Endothelial cell of umbilical vein (primary cell): ENCODE measurements at regions of chr9 and their contacts with region 1.

Region 1: DNA sequence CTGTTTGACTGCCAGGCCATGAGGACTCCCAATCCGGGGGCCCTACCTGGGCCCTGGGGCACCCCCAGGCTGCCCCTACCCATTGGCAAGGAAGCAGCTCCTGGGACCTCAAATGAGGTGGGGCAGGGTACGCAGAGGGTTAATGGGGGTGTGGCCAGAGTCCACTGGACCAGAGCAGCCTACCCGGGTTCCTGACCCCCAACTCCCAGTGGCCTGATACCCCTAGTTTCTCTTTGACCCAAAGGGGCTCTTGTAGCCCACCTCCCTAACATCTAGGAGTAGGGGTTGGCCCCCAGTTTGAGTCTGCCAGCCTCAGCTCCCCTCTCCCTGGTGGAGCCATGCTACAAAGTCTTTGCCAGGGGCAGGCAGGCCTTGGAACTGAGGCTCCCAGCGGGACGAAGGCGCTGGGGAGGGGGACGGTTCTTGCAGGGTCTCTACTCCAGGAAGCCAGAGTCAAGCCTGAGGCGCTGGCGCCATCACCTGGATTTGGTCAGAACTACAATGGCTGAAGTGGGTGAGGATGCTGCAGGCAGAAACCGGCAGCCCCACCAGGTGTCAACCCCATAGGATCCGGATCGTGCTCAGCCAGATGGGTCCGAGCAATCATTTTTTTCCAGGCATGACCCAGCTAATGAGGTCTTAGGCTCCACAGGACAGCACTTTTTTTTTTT is 8.4 kb upstream of the CERCAM start:
- DNase-seq: peak; percentile 76
- H3K4me3 ChIP-seq: no peak overlapping the region
- H3K27ac ChIP-seq: no peak overlapping the region
- H3K4me1 ChIP-seq: no peaks in the 10 kb centered on the region
- H3K27me3 ChIP-seq: peaks cover 9% of the 10 kb centered on the region in 2 experiments
- CTCF ChIP-seq: peak; percentile 54 to 84
- POLR2A ChIP-seq: no peak

Region 2: DNA sequence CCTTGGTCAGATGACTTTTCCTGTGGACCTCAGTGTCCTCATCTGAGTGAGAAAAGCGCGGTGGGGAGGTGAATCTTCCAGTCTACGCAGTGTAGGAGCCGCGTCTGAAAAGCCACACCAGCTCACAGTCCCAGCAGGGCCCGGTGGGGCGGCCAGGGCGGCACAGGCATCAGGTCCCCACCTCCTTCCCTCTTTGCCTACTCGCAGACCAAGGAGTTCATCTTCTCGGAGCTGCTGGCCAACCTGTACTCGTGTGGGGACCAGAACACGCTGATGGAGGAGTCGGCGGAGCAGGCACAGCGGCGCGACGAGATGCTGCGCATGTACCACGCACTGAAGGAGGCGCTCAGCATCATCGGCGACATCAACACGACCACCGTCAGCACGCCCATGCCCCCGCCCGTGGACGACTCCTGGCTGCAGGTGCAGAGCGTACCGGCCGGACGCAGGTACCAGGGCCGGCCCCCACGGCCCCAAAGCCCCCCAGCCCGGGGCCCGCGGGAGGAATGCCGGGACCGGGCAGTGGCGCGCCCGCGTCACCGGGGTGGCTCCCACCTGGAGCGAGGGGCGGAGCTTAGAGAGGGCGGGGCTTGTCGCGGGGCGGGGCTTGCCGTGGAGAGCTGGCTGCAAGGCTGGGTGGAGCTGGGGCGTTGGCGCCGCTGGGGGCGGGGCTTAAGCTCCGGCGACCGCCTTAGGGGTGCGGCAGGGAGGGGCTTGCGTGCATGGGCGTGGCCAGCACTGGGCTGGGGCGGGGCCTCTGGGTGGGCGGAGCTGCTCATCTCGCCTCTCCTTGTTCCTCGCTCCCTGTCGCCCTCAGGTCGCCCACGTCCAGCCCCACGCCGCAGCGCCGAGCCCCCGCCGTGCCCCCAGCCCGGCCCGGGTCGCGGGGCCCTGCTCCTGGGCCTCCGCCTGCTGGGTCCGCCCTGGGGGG is 162.1 kb before region 1 on chr9:
- CTCF ChIA-PET with region 1: interaction called, 11 read pairs
- POLR2A ChIA-PET with region 1: no interaction called
- dilution Hi-C with region 1: no loop called
- intact Hi-C with region 1: loop called (anchors 1 kb)
- DNase-seq: peak; percentile 82
- H3K4me3 ChIP-seq: peak overlapping the region; percentile 34 to 52 (median 36)
- H3K27ac ChIP-seq: no peak overlapping the region
- H3K4me1 ChIP-seq: peaks cover 28% of the 10 kb centered on the region
- H3K27me3 ChIP-seq: no peaks in the 10 kb centered on the region
- CTCF ChIP-seq: no peak
- POLR2A ChIP-seq: no peak

Region 3: DNA sequence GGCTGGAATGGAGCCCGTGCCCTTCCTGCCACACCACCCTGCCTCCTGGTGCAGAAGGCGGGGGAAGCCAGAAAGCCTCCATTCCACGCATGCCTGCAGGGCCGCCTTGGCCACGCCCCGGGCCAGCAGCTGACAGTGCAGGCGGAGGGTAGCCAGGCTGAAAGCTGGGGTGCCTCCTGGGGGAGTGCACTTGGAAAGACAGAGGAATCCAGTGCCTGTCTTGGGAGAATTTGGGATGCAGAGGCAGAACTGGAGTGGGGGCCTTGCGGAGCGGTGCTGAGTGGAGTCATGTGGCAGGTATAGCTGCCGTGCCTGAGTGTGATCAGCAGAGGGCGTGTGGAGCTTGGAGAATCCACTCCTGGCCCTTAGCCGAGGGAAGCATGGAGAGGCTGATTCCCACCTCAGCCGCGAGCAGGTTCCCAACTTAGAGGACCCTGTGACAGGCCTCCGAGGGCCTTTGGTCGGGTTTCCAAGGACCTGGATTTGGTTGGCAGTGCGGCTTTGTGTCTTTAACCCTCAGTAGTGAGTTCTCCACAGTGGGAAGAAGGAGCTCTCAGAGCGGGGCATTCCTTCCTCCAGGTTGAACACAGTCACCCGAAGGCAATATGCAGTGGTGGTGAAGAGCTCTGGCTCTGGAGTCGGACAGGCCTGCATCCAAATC is 50.1 kb before region 1 on chr9:
- CTCF ChIA-PET with region 1: interaction called, 108 read pairs
- POLR2A ChIA-PET with region 1: no interaction called
- dilution Hi-C with region 1: no loop called
- intact Hi-C with region 1: loop called (anchors 1 kb)
- DNase-seq: peak; percentile 87
- H3K4me3 ChIP-seq: peak overlapping the region in 2 of 3 experiments; percentile 37 to 48
- H3K27ac ChIP-seq: no peak overlapping the region
- H3K4me1 ChIP-seq: peaks cover 17% of the 10 kb centered on the region
- H3K27me3 ChIP-seq: no peaks in the 10 kb centered on the region
- CTCF ChIP-seq: peak; percentile 79 to 92
- POLR2A ChIP-seq: peak; percentile 66

Region 4: DNA sequence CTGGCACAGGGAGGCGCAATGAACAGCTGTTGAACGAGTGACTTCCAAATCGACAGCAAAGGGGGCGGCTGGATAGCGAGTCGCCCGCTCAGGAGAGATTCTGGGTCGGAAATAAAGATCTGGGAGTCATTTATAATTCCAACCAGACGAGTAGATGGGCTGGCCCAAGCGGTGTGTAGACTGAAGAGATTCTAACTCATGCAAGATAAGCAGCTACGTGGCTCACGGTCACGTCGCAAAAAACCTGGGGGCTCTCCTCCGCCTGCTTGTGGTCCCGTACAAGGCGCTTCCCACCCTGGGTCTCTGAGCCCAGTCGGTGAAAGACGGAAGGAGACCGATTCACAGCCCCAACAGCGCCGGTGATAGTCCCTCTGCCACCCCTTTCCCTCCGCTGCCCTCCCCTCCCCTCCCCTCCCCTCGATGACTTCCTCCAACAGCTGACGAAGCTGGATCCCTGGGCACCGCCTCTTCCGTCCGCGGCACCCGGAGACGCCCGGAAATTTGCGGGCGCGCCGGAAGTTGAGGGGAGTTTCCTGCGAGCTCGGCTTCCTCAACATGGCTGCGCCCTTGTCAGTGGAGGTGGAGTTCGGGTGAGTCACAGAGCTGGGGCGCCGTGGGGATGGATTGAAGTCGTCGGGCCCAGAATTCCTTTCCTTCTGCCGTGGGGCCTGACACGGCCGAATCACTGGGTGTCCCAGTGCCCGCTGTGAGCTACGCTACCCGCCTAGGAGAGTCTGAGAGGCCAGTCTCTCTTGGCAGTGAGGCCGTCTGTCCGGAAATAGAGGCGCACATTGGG is 41.2 kb before region 1 on chr9 and contains the start of gene URM1:
- CTCF ChIA-PET with region 1: interaction called, 10 read pairs
- POLR2A ChIA-PET with region 1: no interaction called
- dilution Hi-C with region 1: no loop called
- intact Hi-C with region 1: loop called (anchors 2 kb)
- DNase-seq: peak; percentile 98
- H3K4me3 ChIP-seq: peak within 1 kb of the TSS; percentile 72 to 95 (median 87)
- H3K27ac ChIP-seq: peak within 1 kb of the TSS; percentile 82
- H3K4me1 ChIP-seq: peaks cover 17% of the 10 kb centered on the region
- H3K27me3 ChIP-seq: no peaks in the 10 kb centered on the region
- CTCF ChIP-seq: peak in 1 of 2 donors; percentile 6
- POLR2A ChIP-seq: peak; percentile 91
- total RNA-seq, gene URM1: 100 and 101 TPM in 2 replicates

Region 5: GRCh38 chr9:128389395-128390149 is 22.7 kb before region 1 on chr9:
- CTCF ChIA-PET with region 1: interaction called, 12 read pairs
- POLR2A ChIA-PET with region 1: no interaction called
- dilution Hi-C with region 1: no loop called
- intact Hi-C with region 1: no loop called
- DNase-seq: no peak
- H3K4me3 ChIP-seq: no peak overlapping the region
- H3K27ac ChIP-seq: no peak overlapping the region
- H3K4me1 ChIP-seq: no peaks in the 10 kb centered on the region
- H3K27me3 ChIP-seq: no peaks in the 10 kb centered on the region
- CTCF ChIP-seq: no peak
- POLR2A ChIP-seq: no peak

Region 6: DNA sequence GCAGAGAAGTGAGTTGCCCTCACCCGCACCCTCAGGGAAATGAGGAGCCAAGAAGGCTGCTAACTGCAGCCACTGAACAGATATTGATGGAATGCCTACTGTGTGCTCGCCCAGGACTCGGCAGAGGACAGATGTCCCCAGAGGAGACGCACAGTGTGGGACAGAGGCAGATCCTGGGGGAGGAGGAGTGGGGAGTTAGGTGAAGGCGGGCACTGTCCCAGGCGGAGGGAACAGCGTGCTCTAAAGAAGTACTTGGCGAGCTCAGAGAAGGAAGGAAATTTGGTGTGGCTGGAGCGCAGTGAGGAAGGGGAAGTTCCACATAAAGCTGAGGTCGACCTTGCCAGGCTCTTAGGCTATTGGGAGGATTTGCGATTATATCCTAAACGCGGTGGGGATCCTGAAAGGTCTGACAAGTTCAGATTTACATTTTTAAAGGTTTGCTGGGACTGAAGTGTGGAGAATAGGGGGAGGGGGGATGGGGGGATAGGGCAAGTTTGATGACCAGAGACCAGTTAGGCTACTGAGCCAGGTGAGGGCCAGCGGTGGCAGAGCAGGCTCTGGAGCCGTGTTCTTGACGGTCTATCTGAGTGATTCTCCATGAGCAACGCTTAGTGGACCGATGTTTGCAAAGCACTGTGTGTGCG is 15.2 kb before region 1 on chr9:
- CTCF ChIA-PET with region 1: interaction called, 14 read pairs
- POLR2A ChIA-PET with region 1: no interaction called
- dilution Hi-C with region 1: no loop called
- intact Hi-C with region 1: no loop called
- DNase-seq: peak; percentile 24
- H3K4me3 ChIP-seq: peak overlapping the region in 1 of 3 experiments; percentile 8
- H3K27ac ChIP-seq: no peak overlapping the region
- H3K4me1 ChIP-seq: peaks cover 5% of the 10 kb centered on the region
- H3K27me3 ChIP-seq: no peaks in the 10 kb centered on the region
- CTCF ChIP-seq: no peak
- POLR2A ChIP-seq: no peak